Panc1 (cell line): ENCODE measurements at regions of chr12 and their contacts with region 1.

Region 1: GRCh38 chr12:110093631-110094311 is 30.4 kb upstream of the IFT81 start:
- DNase-seq: no peak
- ATAC-seq: no peak
- H3K4me3 ChIP-seq: no peak overlapping the region
- H3K27ac ChIP-seq: no peak overlapping the region
- H3K4me1 ChIP-seq: no peaks in the 10 kb centered on the region
- H3K27me3 ChIP-seq: no peaks in the 10 kb centered on the region
- CTCF ChIP-seq: no peak

Region 2: DNA sequence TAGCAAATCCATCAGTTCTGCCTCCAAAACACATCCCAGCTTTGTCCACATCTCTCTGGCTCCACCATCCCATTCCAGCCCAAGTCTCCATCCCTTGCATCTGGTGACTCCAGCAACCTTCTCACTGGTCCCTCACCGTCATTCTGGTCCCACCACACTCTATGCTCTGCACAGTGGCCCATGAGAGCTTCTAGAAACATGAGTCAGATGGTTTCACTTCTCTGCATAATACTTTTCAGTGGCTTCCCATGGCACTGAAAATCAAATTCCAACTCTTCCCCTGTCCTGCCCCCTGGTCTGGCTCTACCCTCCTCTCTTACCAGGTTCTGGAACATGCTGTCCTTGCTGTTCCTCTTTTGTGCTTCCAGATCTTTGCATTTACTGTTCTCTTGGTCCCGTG is 28.2 kb before region 1 on chr12:
- CTCF ChIA-PET with region 1: no interaction called
- POLR2A ChIA-PET with region 1: interaction called, 11 read pairs
- in situ Hi-C with region 1: no loop called
- intact Hi-C with region 1: no loop called
- DNase-seq: no peak
- ATAC-seq: no peak
- H3K4me3 ChIP-seq: no peak overlapping the region
- H3K27ac ChIP-seq: no peak overlapping the region
- H3K4me1 ChIP-seq: no peaks in the 10 kb centered on the region
- H3K27me3 ChIP-seq: no peaks in the 10 kb centered on the region
- CTCF ChIP-seq: no peak

Region 3: GRCh38 chr12:110075880-110076279 is 17.9 kb before region 1 on chr12:
- CTCF ChIA-PET with region 1: no interaction called
- POLR2A ChIA-PET with region 1: interaction called, 19 read pairs
- in situ Hi-C with region 1: no loop called
- intact Hi-C with region 1: no loop called
- DNase-seq: no peak
- ATAC-seq: no peak
- H3K4me3 ChIP-seq: no peak overlapping the region
- H3K27ac ChIP-seq: no peak overlapping the region
- H3K4me1 ChIP-seq: no peaks in the 10 kb centered on the region
- H3K27me3 ChIP-seq: no peaks in the 10 kb centered on the region
- CTCF ChIP-seq: no peak

Region 4: DNA sequence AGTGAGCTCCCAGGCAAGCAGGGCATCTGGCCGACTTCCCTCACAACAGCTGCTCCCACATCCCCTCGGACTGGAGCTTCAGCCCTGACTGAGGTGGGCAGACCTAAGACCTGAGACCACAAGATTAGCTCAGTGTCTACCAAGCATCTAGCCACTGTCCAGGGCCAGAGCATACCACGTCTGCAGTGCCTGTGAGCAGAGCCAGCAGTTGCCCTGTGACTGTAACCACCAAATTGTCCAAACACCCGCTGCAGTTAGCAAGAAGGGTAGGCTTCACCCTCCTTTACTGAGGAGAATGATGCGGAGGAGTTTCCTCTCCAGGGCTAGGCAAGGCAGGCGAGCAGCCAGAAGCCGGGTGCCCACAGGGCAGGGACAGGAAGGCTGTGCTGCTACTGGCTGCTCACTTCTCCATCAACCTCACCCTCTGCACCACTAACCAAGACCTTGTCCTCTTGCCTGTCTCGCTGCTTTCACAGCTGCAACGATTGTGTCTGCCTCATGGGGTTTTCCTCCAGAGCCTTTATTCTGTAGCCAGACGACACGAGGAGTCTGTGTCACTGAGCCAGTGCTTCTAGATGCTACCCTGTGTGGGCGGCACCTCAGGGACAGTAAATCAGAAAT is 255.9 kb after region 1 on chr12:
- CTCF ChIA-PET with region 1: no interaction called
- POLR2A ChIA-PET with region 1: no interaction called
- in situ Hi-C with region 1: no loop called
- intact Hi-C with region 1: no loop called
- DNase-seq: no peak
- ATAC-seq: peak; percentile 18
- H3K4me3 ChIP-seq: no peak overlapping the region
- H3K27ac ChIP-seq: no peak overlapping the region
- H3K4me1 ChIP-seq: no peaks in the 10 kb centered on the region
- H3K27me3 ChIP-seq: no peaks in the 10 kb centered on the region
- CTCF ChIP-seq: no peak